ENCODE measurements at regions of chr4 and their contacts with region 1.

Region 1: GRCh38 chr4:74376888-74377483 is 12.0 kb downstream of the EREG start:
- DNase-seq: no peak
- H3K4me3 ChIP-seq: no peak overlapping the region
- H3K27ac ChIP-seq: no peak overlapping the region
- H3K4me1 ChIP-seq: no peaks in the 10 kb centered on the region
- H3K27me3 ChIP-seq: no peaks in the 10 kb centered on the region
- CTCF ChIP-seq: peak; percentile 56 to 65

Region 2: DNA sequence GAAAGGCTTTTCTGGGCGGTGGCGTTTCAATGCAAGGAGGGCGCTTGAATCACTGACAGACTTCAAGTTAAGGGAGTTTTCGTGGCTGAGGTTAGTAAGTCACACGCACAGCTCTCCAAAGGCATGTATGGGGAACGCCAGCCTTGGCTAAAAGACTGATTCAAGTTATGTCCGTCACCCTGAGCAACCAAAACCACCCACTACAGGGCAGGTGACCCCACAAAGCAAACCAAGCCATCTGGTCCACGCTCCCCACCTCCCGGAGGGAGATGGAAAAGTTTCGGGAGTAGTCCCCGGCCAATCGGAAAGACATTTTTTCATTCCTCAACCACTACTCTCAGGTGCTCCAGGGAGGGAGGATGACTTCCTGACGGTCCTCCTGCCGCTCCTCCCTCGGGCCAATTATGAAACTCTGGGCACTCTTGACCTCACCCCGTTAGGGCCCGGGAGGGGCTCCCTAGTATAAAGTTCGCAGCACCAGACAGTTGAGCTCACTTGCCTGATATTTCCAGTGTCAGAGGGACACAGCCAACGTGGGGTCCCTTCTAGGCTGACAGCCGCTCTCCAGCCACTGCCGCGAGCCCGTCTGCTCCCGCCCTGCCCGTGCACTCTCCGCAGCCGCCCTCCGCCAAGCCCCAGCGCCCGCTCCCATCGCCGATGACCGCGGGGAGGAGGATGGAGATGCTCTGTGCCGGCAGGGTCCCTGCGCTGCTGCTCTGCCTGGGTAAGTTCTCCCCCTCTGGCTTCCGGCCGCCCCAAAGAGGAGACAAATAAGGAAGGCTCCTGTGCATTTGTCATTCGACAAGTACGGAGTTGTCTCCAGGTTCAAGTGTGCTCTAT is 12.1 kb before region 1 on chr4 and contains the start of gene EREG:
- intact Hi-C with region 1: no loop called
- DNase-seq: peak in 1 of 2 donors; percentile 24
- H3K4me3 ChIP-seq: peak within 1 kb of the TSS; percentile 37 to 55
- H3K27ac ChIP-seq: no peak within 1 kb of the TSS
- H3K4me1 ChIP-seq: peaks cover 0 to 17% (median 11%) of the 10 kb centered on the region in 4 donors
- H3K27me3 ChIP-seq: peaks cover 0 to 9% of the 10 kb centered on the region in 2 donors
- CTCF ChIP-seq: no peak

Region 3: GRCh38 chr4:74531963-74532794 is 155.2 kb after region 1 on chr4:
- intact Hi-C with region 1: loop called (anchors 5 kb)
- DNase-seq: no peak
- H3K4me3 ChIP-seq: no peak overlapping the region
- H3K27ac ChIP-seq: no peak overlapping the region
- H3K4me1 ChIP-seq: no peaks in the 10 kb centered on the region
- H3K27me3 ChIP-seq: no peaks in the 10 kb centered on the region
- CTCF ChIP-seq: peak; percentile 55 to 72

Measured in tibial artery (tissue), 4 donors.